Posterior vena cava (tissue), 2 donors: ENCODE measurements at regions of chr4 and their contacts with region 1.

Region 1: DNA sequence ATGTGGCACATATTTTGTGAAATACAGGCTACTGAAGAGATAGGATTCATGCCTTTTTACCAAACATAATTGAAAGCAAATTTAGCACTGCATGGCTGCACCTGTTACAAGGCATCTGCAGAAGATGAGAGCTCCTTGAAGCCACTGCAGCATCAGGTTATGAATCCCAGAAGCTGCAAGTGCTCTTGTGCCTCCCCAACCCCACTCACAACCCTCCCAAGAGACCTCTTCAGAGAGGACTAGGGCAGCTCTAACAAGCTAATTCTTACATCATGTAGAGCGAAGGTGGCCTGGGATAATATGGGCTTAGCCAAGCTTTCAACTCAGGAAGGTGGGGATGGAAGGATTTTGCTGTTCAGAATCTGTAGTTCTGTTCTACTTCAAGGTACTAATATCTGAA is 27.2 kb downstream of the MFAP3L start:
- DNase-seq: no peak

Region 2: GRCh38 chr4:169968999-169969398 is 30.0 kb before region 1 on chr4:
- intact Hi-C with region 1: loop called in 1 of 2 experiments (anchors 1 kb)
- DNase-seq: no peak